HepG2 (cell line): ENCODE measurements at regions of chr2 and their contacts with region 1.

Region 1: GRCh38 chr2:138373993-138374408 is 127.6 kb upstream of the SPOPL start:
- DNase-seq: peak; percentile 58
- ATAC-seq: peak; percentile 69
- H3K4me3 ChIP-seq: no peak overlapping the region
- H3K27ac ChIP-seq: no peak overlapping the region
- H3K4me1 ChIP-seq: no peaks in the 10 kb centered on the region
- H3K27me3 ChIP-seq: no peaks in the 10 kb centered on the region
- CTCF ChIP-seq: peak; percentile 77
- EP300 ChIP-seq: no peak
- POLR2A ChIP-seq: no peak
- RAD21 ChIP-seq: peak; percentile 74

Region 2: GRCh38 chr2:137900421-137901141 is 473.4 kb before region 1 on chr2:
- CTCF ChIA-PET with region 1: no interaction called
- POLR2A ChIA-PET with region 1: no interaction called
- in situ Hi-C with region 1: loop called (anchors 10 kb)
- intact Hi-C with region 1: no loop called
- DNase-seq: no peak
- ATAC-seq: no peak
- H3K4me3 ChIP-seq: no peak overlapping the region
- H3K27ac ChIP-seq: no peak overlapping the region
- H3K4me1 ChIP-seq: peaks cover 23% of the 10 kb centered on the region
- H3K27me3 ChIP-seq: no peaks in the 10 kb centered on the region
- CTCF ChIP-seq: no peak
- EP300 ChIP-seq: no peak
- POLR2A ChIP-seq: no peak
- RAD21 ChIP-seq: no peak

Region 3: GRCh38 chr2:137969418-137969765 is 404.6 kb before region 1 on chr2:
- CTCF ChIA-PET with region 1: no interaction called
- POLR2A ChIA-PET with region 1: no interaction called
- in situ Hi-C with region 1: no loop called
- intact Hi-C with region 1: loop called (anchors 2 kb)
- DNase-seq: no peak
- ATAC-seq: no peak
- H3K4me3 ChIP-seq: peak overlapping the region; percentile 11 to 85 (median 82); a peak in 3 of 6 replicates
- H3K27ac ChIP-seq: peak overlapping the region; percentile 100
- H3K4me1 ChIP-seq: peaks cover 76% of the 10 kb centered on the region
- H3K27me3 ChIP-seq: no peaks in the 10 kb centered on the region; a peak in 2 of 5 replicates
- CTCF ChIP-seq: no peak
- EP300 ChIP-seq: no peak
- POLR2A ChIP-seq: no peak
- RAD21 ChIP-seq: no peak

Region 4: GRCh38 chr2:138180692-138181386 is 193.2 kb before region 1 on chr2:
- CTCF ChIA-PET with region 1: no interaction called
- POLR2A ChIA-PET with region 1: no interaction called
- in situ Hi-C with region 1: no loop called
- intact Hi-C with region 1: loop called (anchors 1 kb)
- DNase-seq: peak; percentile 23
- ATAC-seq: peak; percentile 81
- H3K4me3 ChIP-seq: no peak overlapping the region
- H3K27ac ChIP-seq: no peak overlapping the region
- H3K4me1 ChIP-seq: peaks cover 35% of the 10 kb centered on the region
- H3K27me3 ChIP-seq: no peaks in the 10 kb centered on the region
- CTCF ChIP-seq: peak; percentile 55
- EP300 ChIP-seq: no peak
- POLR2A ChIP-seq: no peak
- RAD21 ChIP-seq: peak; percentile 19; the same call in 1 of the 2 replicates

Region 5: DNA sequence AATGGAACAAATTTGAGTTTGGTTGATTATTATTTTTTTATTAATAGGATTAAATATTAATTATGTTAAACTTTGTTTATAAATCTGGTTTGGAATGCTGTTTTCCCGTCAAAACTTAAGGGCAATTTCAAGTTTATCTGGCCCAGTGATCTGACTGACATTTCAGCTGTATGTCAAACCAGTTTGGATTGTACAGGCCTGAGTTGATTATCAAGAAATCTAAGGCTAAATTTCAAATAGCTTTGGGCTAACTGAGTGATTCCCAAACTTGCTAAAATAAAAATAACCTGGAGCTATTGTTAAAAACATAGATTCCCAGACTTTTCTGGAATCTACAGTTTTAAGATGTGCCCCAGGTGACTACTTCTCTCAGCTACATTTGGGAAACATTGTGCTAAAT is 61.7 kb after region 1 on chr2:
- CTCF ChIA-PET with region 1: no interaction called
- POLR2A ChIA-PET with region 1: no interaction called
- in situ Hi-C with region 1: no loop called
- intact Hi-C with region 1: loop called (anchors 5 kb)
- DNase-seq: no peak
- ATAC-seq: no peak
- H3K4me3 ChIP-seq: no peak overlapping the region
- H3K27ac ChIP-seq: no peak overlapping the region
- H3K4me1 ChIP-seq: peaks cover 38% of the 10 kb centered on the region
- H3K27me3 ChIP-seq: no peaks in the 10 kb centered on the region
- CTCF ChIP-seq: no peak
- EP300 ChIP-seq: no peak
- POLR2A ChIP-seq: no peak
- RAD21 ChIP-seq: no peak

Region 6: GRCh38 chr2:138712212-138712979 is 338.4 kb after region 1 on chr2:
- CTCF ChIA-PET with region 1: no interaction called
- POLR2A ChIA-PET with region 1: no interaction called
- in situ Hi-C with region 1: no loop called
- intact Hi-C with region 1: loop called (anchors 1 kb)
- DNase-seq: peak; percentile 37
- ATAC-seq: peak; percentile 76
- H3K4me3 ChIP-seq: peak overlapping the region in 2 of 3 experiments; percentile 21 to 43; a peak in 1 of 6 replicates
- H3K27ac ChIP-seq: no peak overlapping the region
- H3K4me1 ChIP-seq: peaks cover 46% of the 10 kb centered on the region
- H3K27me3 ChIP-seq: peaks cover 0 to 12% of the 10 kb centered on the region in 2 experiments; a peak in 2 of 5 replicates
- CTCF ChIP-seq: no peak
- EP300 ChIP-seq: peak in 1 of 2 experiments; percentile 53; a peak in 1 of 4 replicates
- POLR2A ChIP-seq: no peak
- RAD21 ChIP-seq: no peak

Region 7: GRCh38 chr2:138827426-138828054 is 453.5 kb after region 1 on chr2:
- CTCF ChIA-PET with region 1: interaction called, 3 read pairs
- POLR2A ChIA-PET with region 1: no interaction called
- in situ Hi-C with region 1: no loop called
- intact Hi-C with region 1: loop called (anchors 2 kb)
- DNase-seq: peak; percentile 74
- ATAC-seq: peak; percentile 81
- H3K4me3 ChIP-seq: no peak overlapping the region
- H3K27ac ChIP-seq: no peak overlapping the region
- H3K4me1 ChIP-seq: no peaks in the 10 kb centered on the region
- H3K27me3 ChIP-seq: no peaks in the 10 kb centered on the region
- CTCF ChIP-seq: peak; percentile 83
- EP300 ChIP-seq: no peak
- POLR2A ChIP-seq: no peak
- RAD21 ChIP-seq: peak; percentile 68